Right ventricle myocardium inferior (tissue), 1 donor: ENCODE measurements at regions of chr11 and their contacts with region 1.

Region 1: GRCh38 chr11:14727215-14727614 is 83.6 kb downstream of the PDE3B start:
- DNase-seq: no peak
- ATAC-seq: no peak

Region 2: GRCh38 chr11:14644226-14645014 is 82.8 kb before region 1 on chr11:
- intact Hi-C with region 1: no loop called
- DNase-seq: peak; percentile 83
- ATAC-seq: peak; percentile 72

Region 3: GRCh38 chr11:14656536-14657457 is 70.4 kb before region 1 on chr11:
- intact Hi-C with region 1: loop called (anchors 5 kb)
- DNase-seq: no peak
- ATAC-seq: no peak

Region 4: GRCh38 chr11:14764579-14765527 is 37.6 kb after region 1 on chr11:
- intact Hi-C with region 1: no loop called
- DNase-seq: no peak
- ATAC-seq: no peak

Region 5: GRCh38 chr11:14886513-14886912 is 159.3 kb after region 1 on chr11:
- intact Hi-C with region 1: no loop called
- DNase-seq: no peak
- ATAC-seq: no peak